Mammary epithelial cell (primary cell): ENCODE measurements at regions of chr11 and their contacts with region 1.

Region 1: DNA sequence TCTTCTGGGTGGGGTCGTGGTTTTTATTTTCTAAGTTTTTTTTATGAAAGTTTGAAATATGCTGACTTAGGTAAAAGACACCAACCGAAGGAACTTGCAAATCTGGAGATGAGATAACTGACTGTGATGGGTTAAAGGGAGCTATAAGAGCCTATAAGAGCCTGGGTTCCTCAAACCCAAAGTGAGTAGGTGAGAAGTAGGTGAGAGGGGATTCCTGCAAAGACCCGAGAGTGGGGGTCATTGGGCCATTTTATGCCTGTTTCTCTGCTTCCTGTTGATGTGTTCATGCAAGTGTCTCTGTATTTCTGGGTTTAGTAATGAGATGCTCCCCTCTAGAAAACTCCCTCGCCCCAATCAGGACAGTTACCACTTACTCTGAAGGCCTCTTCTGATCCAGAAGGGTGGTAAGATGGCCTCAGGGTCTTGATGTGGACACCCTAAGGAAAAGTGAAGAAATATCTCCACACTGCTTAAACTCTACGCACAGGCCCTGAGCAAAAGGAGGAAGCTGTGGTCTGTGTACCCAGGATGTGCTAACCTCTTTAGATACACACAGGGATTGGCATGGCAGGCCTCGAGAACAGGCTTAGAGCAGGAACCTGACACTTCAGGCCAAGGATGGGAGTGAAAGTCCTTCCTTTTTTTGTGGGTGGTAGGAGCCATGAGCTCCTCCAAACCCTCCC is 1.8 kb downstream of the FLI1 start:
- DNase-seq: no peak
- H3K4me3 ChIP-seq: peak overlapping the region in 1 of 3 experiments; percentile 73
- H3K27ac ChIP-seq: no peak overlapping the region
- H3K4me1 ChIP-seq: peaks cover 12% of the 10 kb centered on the region
- H3K27me3 ChIP-seq: no peaks in the 10 kb centered on the region
- CTCF ChIP-seq: no peak

Region 2: DNA sequence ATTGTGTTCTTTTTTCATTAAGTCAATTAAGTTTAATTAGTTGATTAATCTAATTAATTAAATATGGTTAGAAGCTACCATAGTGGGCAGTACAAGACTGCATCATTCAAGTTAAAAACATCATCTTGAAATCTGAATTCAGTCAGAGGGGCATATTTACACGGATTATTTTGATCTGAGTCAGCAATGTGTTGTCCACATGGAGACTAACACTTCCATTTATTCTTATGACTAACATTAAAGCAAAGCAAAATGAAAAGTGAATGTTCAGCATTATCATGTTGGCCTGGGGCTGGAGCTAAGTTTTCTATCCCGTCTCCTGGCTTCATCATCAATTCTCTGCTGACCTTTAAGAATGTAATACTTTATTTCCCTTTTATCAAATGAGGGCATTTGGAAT is 15.5 kb after region 1 on chr11:
- CTCF ChIA-PET with region 1: no interaction called
- dilution Hi-C with region 1: no loop called
- in situ Hi-C with region 1: no loop called
- intact Hi-C with region 1: loop called (anchors 2 kb)
- DNase-seq: peak; percentile 49
- H3K4me3 ChIP-seq: no peak overlapping the region
- H3K27ac ChIP-seq: peak overlapping the region; percentile 88
- H3K4me1 ChIP-seq: peaks cover 57% of the 10 kb centered on the region
- H3K27me3 ChIP-seq: no peaks in the 10 kb centered on the region
- CTCF ChIP-seq: no peak

Region 3: DNA sequence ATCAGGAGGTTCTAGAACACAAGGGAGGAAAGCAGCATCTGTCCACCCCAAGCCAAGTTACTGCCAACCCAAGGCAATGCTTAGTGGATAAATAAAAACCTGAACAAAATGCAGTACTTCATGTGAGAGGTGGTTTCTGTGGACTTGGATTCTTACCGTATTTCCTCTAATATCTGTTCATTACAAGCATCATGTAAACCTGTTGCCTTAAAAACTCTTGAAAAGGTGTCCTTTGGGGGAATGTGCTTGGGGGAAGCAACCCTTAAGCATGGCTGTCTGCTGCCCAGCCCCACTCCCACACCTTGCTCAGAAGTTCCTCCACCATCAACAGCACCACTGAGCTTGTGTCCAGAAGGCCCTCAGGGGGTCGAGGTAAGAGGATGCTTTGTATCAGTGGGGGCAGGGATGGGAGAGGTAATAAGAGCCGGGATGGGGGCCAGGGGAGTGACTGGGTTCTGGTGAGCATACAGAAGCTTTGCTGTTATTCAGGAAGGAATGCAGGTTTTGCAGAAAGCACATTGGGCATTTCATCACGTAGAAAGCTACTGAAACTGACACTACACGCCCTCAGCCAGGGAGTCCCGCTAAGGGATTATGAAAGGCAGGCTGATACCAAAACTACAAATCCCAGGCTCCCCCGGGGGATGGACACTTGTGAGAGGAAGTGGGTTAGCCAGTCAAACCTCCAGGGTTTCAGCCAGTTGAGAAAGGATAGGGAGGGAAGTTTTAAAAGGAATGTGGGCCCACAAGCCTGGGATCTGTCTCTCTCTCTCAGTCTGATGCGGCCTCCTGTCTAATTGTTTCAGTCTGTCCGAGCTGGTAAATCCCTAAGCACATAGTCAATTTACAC is 119.4 kb after region 1 on chr11:
- CTCF ChIA-PET with region 1: no interaction called
- dilution Hi-C with region 1: no loop called
- in situ Hi-C with region 1: no loop called
- intact Hi-C with region 1: no loop called
- DNase-seq: peak; percentile 76
- H3K4me3 ChIP-seq: no peak overlapping the region
- H3K27ac ChIP-seq: no peak overlapping the region
- H3K4me1 ChIP-seq: no peaks in the 10 kb centered on the region
- H3K27me3 ChIP-seq: no peaks in the 10 kb centered on the region
- CTCF ChIP-seq: no peak